GM12878 (cell line): ENCODE measurements at regions of chr14 and their contacts with region 1.

Region 1: DNA sequence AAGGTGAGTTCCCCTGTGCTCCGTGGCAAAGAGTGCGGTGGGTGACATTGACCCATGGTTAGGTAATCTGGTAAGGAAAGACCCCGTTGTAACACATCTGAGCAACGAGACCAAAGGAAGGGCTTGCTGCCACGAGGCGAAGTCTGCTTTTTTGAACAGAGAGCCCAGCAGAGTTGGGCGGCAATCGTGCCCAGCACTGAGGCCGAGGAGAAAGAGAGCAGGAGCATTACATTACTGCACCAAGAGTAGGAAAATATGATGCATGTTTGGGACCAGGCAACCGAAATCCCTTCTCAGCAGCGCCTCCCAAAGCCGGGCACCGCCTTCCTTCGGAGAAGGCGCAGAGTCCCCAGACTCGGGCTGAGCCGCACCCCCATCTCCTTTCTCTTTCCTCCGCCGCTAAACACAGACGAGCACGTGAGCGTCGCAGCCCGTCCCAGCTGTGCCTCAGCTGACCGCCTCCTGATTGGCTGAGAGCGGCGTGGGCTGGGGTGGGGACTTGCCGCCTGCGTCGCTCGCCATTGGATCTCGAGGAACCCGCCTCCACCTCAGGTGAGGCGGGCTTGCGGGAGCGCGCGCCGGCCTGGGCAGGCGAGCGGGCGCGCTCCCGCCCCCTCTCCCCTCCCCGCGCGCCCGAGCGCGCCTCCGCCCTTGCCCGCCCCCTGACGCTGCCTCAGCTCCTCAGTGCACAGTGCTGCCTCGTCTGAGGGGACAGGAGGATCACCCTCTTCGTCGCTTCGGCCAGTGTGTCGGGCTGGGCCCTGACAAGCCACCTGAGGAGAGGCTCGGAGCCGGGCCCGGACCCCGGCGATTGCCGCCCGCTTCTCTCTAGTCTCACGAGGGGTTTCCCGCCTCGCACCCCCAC is at the start of gene HIF1A:
- DNase-seq: peak; percentile 96
- ATAC-seq: peak; percentile 84
- H3K4me3 ChIP-seq: peak within 1 kb of the TSS; percentile 97
- H3K27ac ChIP-seq: peak within 1 kb of the TSS; percentile 96
- H3K4me1 ChIP-seq: peaks cover 10% of the 10 kb centered on the region; the same call in 1 of the 2 replicates
- H3K27me3 ChIP-seq: no peaks in the 10 kb centered on the region
- CTCF ChIP-seq: peak in 1 of 3 experiments; percentile 33; a peak in 2 of 6 replicates
- EP300 ChIP-seq: no peak
- POLR2A ChIP-seq: peak; percentile 97
- RAD21 ChIP-seq: 0 out of 2 replicates have a peak, but pooled peaks have one; percentile 23
- polyA plus RNA-seq, gene HIF1A: 18.3 to 22.3 TPM

Region 2: GRCh38 chr14:61388173-61388975 is 306.7 kb before region 1 on chr14:
- CTCF ChIA-PET with region 1: no interaction called
- POLR2A ChIA-PET with region 1: interaction called, 3 read pairs
- RAD21 ChIA-PET with region 1: no interaction called
- SMC1A ChIA-PET with region 1: interaction called, 4 read pairs
- in situ Hi-C with region 1: no loop called
- intact Hi-C with region 1: loop called (anchors 5 kb)
- DNase-seq: peak; percentile 86
- ATAC-seq: peak; percentile 74
- H3K4me3 ChIP-seq: peak overlapping the region; percentile 24; the same call in 1 of the 2 replicates
- H3K27ac ChIP-seq: peak overlapping the region; percentile 99
- H3K4me1 ChIP-seq: peaks cover 76% of the 10 kb centered on the region
- H3K27me3 ChIP-seq: no peaks in the 10 kb centered on the region
- CTCF ChIP-seq: no peak
- EP300 ChIP-seq: peak; percentile 90 to 93
- POLR2A ChIP-seq: peak; percentile 63
- RAD21 ChIP-seq: no peak

Region 3: GRCh38 chr14:61662437-61663311 is 32.4 kb before region 1 on chr14:
- CTCF ChIA-PET with region 1: interaction called, 4 read pairs
- POLR2A ChIA-PET with region 1: interaction called, 18 read pairs
- RAD21 ChIA-PET with region 1: interaction called, 28 read pairs
- SMC1A ChIA-PET with region 1: interaction called, 53 read pairs
- in situ Hi-C with region 1: no loop called
- intact Hi-C with region 1: loop called (anchors 1 kb)
- DNase-seq: peak; percentile 100
- ATAC-seq: peak; percentile 87
- H3K4me3 ChIP-seq: peak overlapping the region; percentile 50
- H3K27ac ChIP-seq: peak overlapping the region; percentile 79
- H3K4me1 ChIP-seq: peaks cover 34% of the 10 kb centered on the region
- H3K27me3 ChIP-seq: no peaks in the 10 kb centered on the region
- CTCF ChIP-seq: 0 out of 6 replicates have a peak, but pooled peaks of 1 of the 3 experiments have one; percentile 13
- EP300 ChIP-seq: peak; percentile 73 to 93; a peak in 3 of 4 replicates
- POLR2A ChIP-seq: peak; percentile 82
- RAD21 ChIP-seq: peak; percentile 29; the same call in 1 of the 2 replicates

Region 4: GRCh38 chr14:61681413-61681812 is 13.6 kb before region 1 on chr14:
- CTCF ChIA-PET with region 1: interaction called, 6 read pairs
- POLR2A ChIA-PET with region 1: interaction called, 5 read pairs
- RAD21 ChIA-PET with region 1: interaction called, 7 read pairs
- SMC1A ChIA-PET with region 1: interaction called, 20 read pairs
- in situ Hi-C with region 1: no loop called
- intact Hi-C with region 1: no loop called
- DNase-seq: no peak
- ATAC-seq: no peak
- H3K4me3 ChIP-seq: no peak overlapping the region
- H3K27ac ChIP-seq: no peak overlapping the region
- H3K4me1 ChIP-seq: no peaks in the 10 kb centered on the region; the same call in 1 of the 2 replicates
- H3K27me3 ChIP-seq: no peaks in the 10 kb centered on the region
- CTCF ChIP-seq: no peak
- EP300 ChIP-seq: no peak
- POLR2A ChIP-seq: no peak
- RAD21 ChIP-seq: no peak

Region 5: GRCh38 chr14:61719344-61720293 is 24.6 kb after region 1 on chr14:
- CTCF ChIA-PET with region 1: interaction called, 10 read pairs
- POLR2A ChIA-PET with region 1: interaction called, 8 read pairs
- RAD21 ChIA-PET with region 1: interaction called, 15 read pairs
- SMC1A ChIA-PET with region 1: interaction called, 57 read pairs
- in situ Hi-C with region 1: no loop called
- intact Hi-C with region 1: no loop called
- DNase-seq: no peak
- ATAC-seq: peak; percentile 48
- H3K4me3 ChIP-seq: no peak overlapping the region; the same call in 1 of the 2 replicates
- H3K27ac ChIP-seq: peak overlapping the region; percentile 15; the same call in 1 of the 2 replicates
- H3K4me1 ChIP-seq: peaks cover 20% of the 10 kb centered on the region
- H3K27me3 ChIP-seq: no peaks in the 10 kb centered on the region
- CTCF ChIP-seq: no peak
- EP300 ChIP-seq: no peak
- POLR2A ChIP-seq: no peak
- RAD21 ChIP-seq: no peak

Region 6: GRCh38 chr14:61750708-61751474 is 55.8 kb after region 1 on chr14:
- CTCF ChIA-PET with region 1: interaction called, 6 read pairs
- POLR2A ChIA-PET with region 1: interaction called, 21 read pairs
- RAD21 ChIA-PET with region 1: interaction called, 52 read pairs
- SMC1A ChIA-PET with region 1: interaction called, 39 read pairs
- in situ Hi-C with region 1: no loop called
- intact Hi-C with region 1: no loop called
- DNase-seq: peak; percentile 83
- ATAC-seq: peak; percentile 93
- H3K4me3 ChIP-seq: peak overlapping the region; percentile 79
- H3K27ac ChIP-seq: peak overlapping the region; percentile 59
- H3K4me1 ChIP-seq: peaks cover 19% of the 10 kb centered on the region
- H3K27me3 ChIP-seq: no peaks in the 10 kb centered on the region
- CTCF ChIP-seq: no peak
- EP300 ChIP-seq: peak; percentile 45 to 66; a peak in 2 of 4 replicates
- POLR2A ChIP-seq: peak; percentile 85
- RAD21 ChIP-seq: no peak